HAP-1 (cell line): ENCODE measurements at regions of chr11 and their contacts with region 1.

Region 1: DNA sequence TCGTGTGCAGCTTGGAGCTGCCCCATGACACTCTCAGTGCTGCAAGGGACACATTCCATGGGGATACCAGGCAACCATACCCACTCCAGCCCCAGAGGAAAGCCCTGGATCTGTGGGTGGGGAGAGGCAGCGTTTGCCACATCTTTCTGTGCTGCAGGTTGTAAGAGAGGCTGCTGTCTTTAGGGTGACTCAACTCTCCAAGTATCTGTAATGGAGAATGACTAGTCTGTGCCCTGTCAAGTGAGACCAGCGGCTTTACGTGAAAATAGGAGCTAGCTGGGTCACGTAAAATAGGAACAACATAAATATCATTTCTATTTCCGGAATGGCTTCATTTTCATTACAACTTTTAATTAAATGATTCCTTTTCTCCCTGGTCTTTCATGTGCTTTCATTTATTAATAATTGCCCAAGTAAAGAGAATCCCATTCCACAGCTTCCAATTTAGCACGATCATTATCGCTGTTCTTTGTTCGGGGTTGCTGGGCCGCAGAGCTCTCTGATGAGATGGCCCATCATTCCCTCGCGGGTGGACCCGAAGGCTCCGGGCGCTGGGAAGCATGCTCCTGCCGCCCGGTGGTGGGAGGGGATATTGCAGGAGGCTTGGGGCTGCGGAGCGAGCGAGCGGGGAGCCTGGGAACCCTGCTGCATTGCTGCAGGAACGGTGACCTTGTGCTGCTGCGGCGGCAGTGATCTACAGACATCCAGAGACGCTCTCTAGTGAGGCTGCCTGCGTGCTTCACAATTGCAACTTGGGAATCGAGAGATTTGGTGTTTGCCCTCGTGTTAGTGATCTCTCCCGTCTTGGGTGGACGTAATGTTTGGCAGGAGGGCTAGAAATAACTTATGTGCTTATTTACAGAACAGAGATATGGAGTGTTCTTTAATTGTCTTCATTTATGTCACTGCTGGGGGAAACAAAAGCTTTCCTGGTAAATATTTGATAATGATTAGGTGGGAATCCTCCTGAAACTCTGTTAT is 10.6 kb downstream of the SLC6A5 start:
- DNase-seq: peak; percentile 79 to 93
- H3K4me3 ChIP-seq: no peak overlapping the region
- H3K4me1 ChIP-seq: peaks cover 6% of the 10 kb centered on the region
- H3K27me3 ChIP-seq: peaks cover 33% of the 10 kb centered on the region

Region 2: GRCh38 chr11:20127671-20128527 is 482.1 kb before region 1 on chr11:
- in situ Hi-C with region 1: loop called (anchors 25 kb)
- DNase-seq: peak; percentile 44 to 90
- H3K4me3 ChIP-seq: no peak overlapping the region
- H3K4me1 ChIP-seq: no peaks in the 10 kb centered on the region
- H3K27me3 ChIP-seq: 0 out of 2 replicates have a peak, but pooled peaks cover 6% of the 10 kb centered on the region

Region 3: DNA sequence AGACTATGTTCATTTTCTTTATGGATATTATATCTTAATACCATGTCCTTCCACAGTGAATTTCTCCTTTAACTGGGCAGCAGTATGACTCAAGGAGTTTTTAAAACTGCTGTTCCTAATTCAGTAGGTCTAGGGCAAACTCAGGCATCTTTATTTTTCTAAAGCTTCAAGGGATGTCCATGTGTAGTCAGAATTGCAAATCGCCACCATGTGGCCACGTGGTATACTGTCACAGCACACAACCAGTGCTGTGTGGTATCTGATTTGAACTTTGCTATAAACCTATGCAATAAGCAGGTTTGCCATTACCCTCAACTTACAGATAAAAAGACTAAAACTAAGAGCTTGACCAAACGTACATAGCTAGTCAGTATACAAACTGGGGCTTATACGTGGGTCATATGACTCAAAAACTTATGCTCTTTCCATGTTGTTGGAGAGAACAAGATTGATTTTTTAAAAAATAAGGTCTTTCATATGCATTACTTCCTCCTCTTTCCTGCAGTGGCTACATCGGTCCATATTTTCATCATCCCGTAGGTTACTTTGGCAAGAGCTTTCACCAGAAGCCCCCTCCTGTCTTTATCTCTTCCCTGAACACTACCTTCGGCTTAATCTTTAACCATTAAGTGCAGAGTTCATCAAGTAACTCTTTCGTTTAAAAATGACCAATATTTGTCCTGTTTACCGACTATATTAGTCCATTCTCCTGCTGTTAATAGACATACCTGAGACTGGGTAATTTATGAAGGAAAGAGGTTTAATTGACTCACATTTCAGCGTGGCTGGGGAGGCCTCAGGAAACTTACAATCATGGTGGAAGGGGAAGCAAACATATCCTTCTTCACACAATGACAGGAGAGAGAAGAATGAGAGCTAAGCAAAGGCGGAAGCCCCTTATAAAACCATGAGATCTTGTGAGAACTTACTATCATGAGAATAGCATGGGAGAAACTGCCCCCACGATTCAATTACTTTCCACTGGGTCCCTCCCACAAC is 254.5 kb before region 1 on chr11:
- in situ Hi-C with region 1: loop called (anchors 25 kb)
- DNase-seq: peak; percentile 45 to 60
- H3K4me3 ChIP-seq: no peak overlapping the region
- H3K4me1 ChIP-seq: no peaks in the 10 kb centered on the region
- H3K27me3 ChIP-seq: no peaks in the 10 kb centered on the region